CD14-positive monocyte (primary cell): ENCODE measurements at regions of chr1 and their contacts with region 1.

Region 1: DNA sequence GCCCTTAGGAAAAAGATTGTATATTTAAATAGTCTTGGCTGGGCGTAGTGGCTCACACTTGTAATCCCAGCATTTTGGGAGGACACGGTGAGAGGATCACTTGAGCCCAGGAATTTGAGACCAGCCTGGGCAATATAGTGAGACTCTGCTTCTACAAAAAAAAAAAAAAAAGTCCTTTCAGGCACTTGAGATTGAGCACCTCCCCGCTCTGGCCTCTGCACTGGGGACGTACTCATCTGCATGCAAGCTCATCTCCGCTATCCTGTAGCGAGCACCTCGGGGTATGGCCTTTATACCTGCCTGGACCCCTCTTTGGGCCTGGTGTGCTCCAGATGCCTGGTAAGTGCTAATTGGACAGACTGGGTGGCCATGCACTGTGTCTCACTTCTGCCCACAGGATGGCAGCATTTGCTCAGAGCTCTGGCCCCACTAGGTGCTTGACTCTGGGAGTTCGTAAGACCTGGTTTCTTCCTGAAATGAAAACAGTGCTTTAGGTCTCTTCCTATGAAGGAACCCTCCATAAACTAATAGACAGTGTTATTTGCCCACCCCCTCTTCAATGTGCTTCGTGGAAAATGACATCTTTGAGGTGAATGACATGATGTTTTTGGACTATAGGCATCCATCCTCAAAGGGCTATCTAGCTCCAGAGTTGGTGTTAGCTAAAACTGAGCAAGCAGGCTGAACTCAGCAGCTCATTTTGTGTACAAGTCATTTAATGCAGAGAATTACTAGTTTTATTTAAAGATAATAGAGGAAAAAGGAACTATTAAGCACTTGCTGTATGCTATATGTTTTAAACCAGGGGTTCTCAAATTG is 61.7 kb upstream of the ADAR start:
- DNase-seq: peak; percentile 68 to 73 (median 69)
- H3K4me3 ChIP-seq: no peak overlapping the region
- H3K4me3 Mint-ChIP-seq: no peak overlapping the region
- H3K27ac ChIP-seq: no peak overlapping the region
- H3K27ac Mint-ChIP-seq: no peak overlapping the region
- H3K4me1 ChIP-seq: no peaks in the 10 kb centered on the region
- H3K4me1 Mint-ChIP-seq: no peaks in the 10 kb centered on the region
- H3K27me3 ChIP-seq: no peaks in the 10 kb centered on the region
- H3K27me3 Mint-ChIP-seq: peaks cover 0 to 1% (median 0%) of the 10 kb centered on the region in 3 donors
- CTCF ChIP-seq: peak; percentile 79

Region 2: GRCh38 chr1:154607609-154608396 is 61.9 kb before region 1 on chr1 and contains the start of gene ADAR:
- intact Hi-C with region 1: no loop called
- DNase-seq: peak; percentile 96 to 99 (median 97)
- H3K4me3 ChIP-seq: peak within 1 kb of the TSS; percentile 85 to 97 (median 95)
- H3K4me3 Mint-ChIP-seq: peak within 1 kb of the TSS; percentile 97 to 100
- H3K27ac ChIP-seq: peak within 1 kb of the TSS; percentile 83 to 99
- H3K27ac Mint-ChIP-seq: peak within 1 kb of the TSS; percentile 94 to 100 (median 99)
- H3K4me1 ChIP-seq: peaks cover 46 to 58% of the 10 kb centered on the region in 2 donors
- H3K4me1 Mint-ChIP-seq: peaks cover 76% of the 10 kb centered on the region
- H3K27me3 ChIP-seq: no peaks in the 10 kb centered on the region
- H3K27me3 Mint-ChIP-seq: no peaks in the 10 kb centered on the region
- CTCF ChIP-seq: no peak
- polyA plus RNA-seq, gene ADAR: 57.3 to 100 (median 91.6) TPM

Region 3: DNA sequence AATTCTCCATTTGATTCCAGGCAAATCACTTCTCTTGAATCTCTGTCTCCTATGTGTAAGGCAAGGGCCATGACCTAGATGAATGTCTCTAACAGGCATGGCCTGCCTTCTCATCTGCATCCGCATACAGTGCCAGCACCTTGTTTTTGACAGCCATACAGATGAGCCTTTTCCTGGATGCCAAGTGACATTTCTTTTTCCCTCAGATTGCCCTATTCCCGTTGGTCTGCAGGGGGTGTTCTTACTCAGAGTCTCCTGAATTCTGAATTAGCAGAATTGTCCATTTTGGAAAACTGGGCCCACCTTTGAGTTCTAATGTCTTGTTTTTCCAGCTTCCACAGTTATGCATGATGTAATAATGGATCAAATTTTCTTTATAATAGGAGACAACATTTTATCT is 26.3 kb after region 1 on chr1:
- intact Hi-C with region 1: no loop called
- DNase-seq: no peak
- H3K4me3 ChIP-seq: no peak overlapping the region
- H3K4me3 Mint-ChIP-seq: no peak overlapping the region
- H3K27ac ChIP-seq: no peak overlapping the region
- H3K27ac Mint-ChIP-seq: no peak overlapping the region
- H3K4me1 ChIP-seq: peaks cover 15 to 25% of the 10 kb centered on the region in 2 donors
- H3K4me1 Mint-ChIP-seq: peaks cover 21% of the 10 kb centered on the region
- H3K27me3 ChIP-seq: peaks cover 0 to 3% of the 10 kb centered on the region in 2 donors
- H3K27me3 Mint-ChIP-seq: peaks cover 0 to 10% (median 4%) of the 10 kb centered on the region in 3 donors
- CTCF ChIP-seq: peak; percentile 17

Region 4: DNA sequence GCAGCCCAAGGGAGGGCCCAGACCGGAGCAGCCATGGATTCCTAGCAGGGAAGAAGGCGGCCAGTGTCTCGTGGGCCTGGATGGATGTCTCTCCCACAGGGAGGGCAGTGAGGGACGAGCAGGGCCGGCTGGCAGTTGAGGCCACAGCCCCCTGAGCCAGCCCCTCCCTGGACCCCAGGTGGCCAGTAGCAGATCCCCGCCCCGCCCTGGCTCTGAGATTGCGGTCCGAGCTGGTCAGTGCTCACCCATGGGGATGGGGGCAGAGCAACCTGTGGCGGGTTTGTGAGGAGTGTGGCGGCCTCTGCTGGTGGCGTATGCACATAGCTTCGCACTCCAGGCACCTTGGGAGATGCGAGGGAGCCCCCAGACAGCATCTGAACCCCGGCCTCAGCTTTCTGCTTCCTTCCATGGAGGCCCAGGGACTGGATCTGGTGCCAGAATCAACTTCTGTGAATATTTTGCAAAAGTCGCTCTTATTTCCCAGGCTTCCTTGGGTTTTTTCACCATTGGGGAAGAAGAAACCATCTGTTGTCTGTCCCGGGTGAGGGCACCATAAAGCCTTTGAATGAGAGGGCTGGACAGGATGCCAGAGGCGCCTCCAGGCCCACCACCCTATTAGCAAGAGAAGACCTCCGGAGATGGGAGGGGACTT is 208.8 kb after region 1 on chr1:
- intact Hi-C with region 1: loop called (anchors 2 to 5 kb)
- DNase-seq: peak; percentile 50 to 63 (median 55)
- H3K4me3 ChIP-seq: no peak overlapping the region
- H3K4me3 Mint-ChIP-seq: no peak overlapping the region
- H3K27ac ChIP-seq: no peak overlapping the region
- H3K27ac Mint-ChIP-seq: no peak overlapping the region
- H3K4me1 ChIP-seq: no peaks in the 10 kb centered on the region
- H3K4me1 Mint-ChIP-seq: no peaks in the 10 kb centered on the region
- H3K27me3 ChIP-seq: no peaks in the 10 kb centered on the region
- H3K27me3 Mint-ChIP-seq: peaks cover 2 to 11% (median 3%) of the 10 kb centered on the region in 3 donors
- CTCF ChIP-seq: peak; percentile 76